BJ (cell line): ENCODE measurements at regions of chr5 and their contacts with region 1.

Region 1: DNA sequence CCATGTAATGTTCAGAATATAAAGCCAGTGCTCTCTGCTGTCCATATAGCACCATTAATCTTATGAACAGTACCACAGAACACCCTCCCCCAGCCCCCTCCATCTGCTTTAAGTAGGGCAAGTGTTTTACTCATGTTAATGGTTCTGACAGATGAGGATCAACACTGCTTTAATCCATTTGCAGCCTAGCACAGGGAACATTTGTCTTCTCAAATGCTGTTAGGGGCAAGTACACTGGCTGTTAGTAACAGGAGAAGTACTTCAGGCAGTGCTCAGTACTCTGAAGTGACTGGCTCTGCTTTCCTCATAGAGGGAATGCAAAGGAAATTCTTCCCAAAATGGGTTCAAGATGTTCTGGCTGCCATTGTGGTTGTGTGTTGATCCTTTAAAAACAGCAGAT is 202.6 kb downstream of the DCP2 start:
- DNase-seq: no peak
- H3K4me3 ChIP-seq: no peak overlapping the region
- H3K27me3 ChIP-seq: no peaks in the 10 kb centered on the region
- CTCF ChIP-seq: no peak

Region 2: DNA sequence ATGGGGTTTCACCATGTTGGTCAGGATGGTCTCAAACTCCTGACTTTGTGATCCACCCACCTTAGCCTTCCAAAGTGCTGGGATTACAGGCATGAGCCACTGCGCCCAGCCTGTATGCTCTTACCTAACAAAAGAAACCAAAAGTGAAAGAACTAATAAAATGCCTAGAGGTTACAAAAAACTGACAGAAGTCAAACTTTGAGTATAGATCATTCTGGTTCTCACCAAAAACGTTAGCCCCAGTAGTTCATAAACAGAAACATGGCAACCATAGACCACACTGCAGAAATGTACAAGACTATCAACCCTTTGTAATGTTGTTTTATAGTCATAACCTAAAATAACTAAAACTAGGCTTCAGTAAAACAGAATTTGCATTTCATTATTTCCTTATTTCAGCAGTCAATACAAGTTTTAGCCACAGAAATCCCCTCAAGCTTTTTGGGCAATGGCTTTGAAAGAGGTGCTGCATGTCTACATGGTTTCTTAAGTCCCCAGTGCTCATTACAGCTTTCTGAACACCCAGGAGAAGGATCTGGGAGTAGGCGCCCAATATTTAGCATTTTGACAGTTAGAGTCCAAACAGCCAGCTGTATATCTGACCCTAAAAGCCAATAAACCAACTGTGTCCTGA is 832.6 kb before region 1 on chr5:
- CTCF ChIA-PET with region 1: no interaction called
- POLR2A ChIA-PET with region 1: no interaction called
- DNase-seq: no peak
- H3K4me3 ChIP-seq: no peak overlapping the region
- H3K27me3 ChIP-seq: no peaks in the 10 kb centered on the region
- CTCF ChIP-seq: no peak

Region 3: GRCh38 chr5:113035096-113035495 is 144.1 kb before region 1 on chr5:
- CTCF ChIA-PET with region 1: interaction called, 3 read pairs
- POLR2A ChIA-PET with region 1: interaction called, 11 read pairs
- DNase-seq: no peak
- H3K4me3 ChIP-seq: no peak overlapping the region
- H3K27me3 ChIP-seq: no peaks in the 10 kb centered on the region
- CTCF ChIP-seq: no peak

Region 4: DNA sequence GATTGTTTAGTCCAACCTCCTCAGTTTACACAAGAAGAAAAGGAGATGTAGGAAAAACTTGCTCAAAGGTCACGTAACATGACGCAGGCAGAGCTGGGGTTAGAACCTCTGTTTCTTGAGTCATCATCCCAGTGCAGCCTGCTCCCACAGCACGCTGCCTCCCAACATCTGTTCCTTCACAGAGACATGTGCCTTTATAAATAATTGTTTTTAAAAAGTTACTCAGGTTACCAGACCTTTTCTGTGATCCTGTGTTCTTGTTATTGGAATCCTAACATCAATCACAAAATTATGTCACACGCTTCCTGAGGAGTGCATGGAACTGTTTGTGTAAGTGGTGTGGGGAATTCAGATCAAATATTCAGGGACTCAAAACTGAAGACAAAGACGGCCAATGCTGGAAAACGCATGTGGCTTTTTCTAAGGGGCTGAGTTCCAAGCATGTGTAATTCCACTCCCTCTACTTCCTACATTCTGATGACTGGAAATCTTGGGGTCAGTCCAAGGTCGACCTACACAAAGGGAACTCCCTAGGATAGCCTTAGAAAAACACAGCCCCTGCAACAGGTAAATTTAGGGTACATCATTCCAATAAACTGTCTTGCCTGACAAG is 71.3 kb after region 1 on chr5:
- CTCF ChIA-PET with region 1: no interaction called
- POLR2A ChIA-PET with region 1: no interaction called
- DNase-seq: peak; percentile 31
- H3K4me3 ChIP-seq: no peak overlapping the region
- H3K27me3 ChIP-seq: no peaks in the 10 kb centered on the region
- CTCF ChIP-seq: no peak